Psoas muscle (tissue), 8 donors: ENCODE measurements at regions of chr10 and their contacts with region 1.

Region 1: DNA sequence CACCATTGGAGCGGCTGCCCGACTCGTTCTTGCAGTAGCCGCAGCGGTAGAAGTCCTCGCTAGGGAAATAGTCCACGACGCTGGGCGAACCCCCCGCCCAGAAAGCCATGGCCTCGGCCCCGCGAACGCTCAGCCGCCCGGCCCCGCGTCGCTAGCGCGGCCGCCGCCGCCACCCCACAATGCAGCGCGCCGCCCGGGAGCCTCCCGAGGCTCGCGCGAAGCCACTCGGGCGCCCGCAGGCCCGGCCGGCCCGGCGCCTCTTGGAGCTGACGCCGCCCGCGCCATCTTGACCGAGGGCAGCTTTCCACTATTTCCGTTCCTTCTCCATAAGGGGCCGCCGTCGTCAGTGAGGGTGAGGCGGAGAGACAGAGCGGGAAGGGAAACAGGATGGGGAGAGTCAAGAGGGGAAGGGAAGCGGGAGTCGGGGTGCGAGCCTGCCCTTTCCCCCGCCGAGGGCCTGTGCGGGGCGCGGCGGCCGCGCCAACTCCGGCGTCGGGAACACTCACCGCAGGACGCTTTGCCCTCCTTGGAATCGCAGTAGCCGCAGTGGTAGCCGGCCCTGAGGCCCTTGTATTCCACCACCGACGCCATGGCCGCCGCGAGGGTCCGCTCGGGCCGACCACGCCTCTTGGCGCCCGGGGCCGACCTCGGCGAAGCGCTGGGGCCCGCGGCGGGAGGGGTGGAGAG is at the start of gene ATE1:
- DNase-seq: peak; percentile 91 to 94
- ATAC-seq: peak; percentile 94 to 97 (median 96)
- H3K4me3 ChIP-seq: peak within 1 kb of the TSS; percentile 85
- H3K27ac ChIP-seq: peak within 1 kb of the TSS; percentile 99
- H3K4me1 ChIP-seq: peaks cover 19% of the 10 kb centered on the region
- H3K27me3 ChIP-seq: no peaks in the 10 kb centered on the region
- CTCF ChIP-seq: peak; percentile 8
- total RNA-seq, gene ATE1: 28.4 to 36.9 (median 31.4) TPM

Region 2: DNA sequence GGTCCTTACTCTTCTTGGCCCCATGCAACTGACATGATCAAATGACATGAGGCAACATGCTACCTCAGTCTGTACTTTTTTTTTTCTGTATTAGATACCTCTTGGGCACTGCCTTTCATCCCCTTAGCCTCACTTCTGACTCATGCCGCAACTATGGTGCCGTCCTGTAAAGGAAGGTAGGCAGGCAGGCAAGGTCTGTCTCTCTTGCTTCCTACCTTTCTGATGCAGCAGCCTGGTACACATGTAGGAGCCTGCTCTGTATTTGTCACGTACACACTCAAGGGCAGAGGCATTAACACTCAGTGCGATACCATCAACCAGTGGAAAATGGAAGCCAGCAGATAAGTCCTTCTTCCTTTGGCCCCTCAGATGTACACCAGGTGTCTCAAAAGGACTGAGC is 146.9 kb before region 1 on chr10:
- intact Hi-C with region 1: no loop called
- DNase-seq: no peak
- ATAC-seq: no peak
- H3K4me3 ChIP-seq: no peak overlapping the region
- H3K27ac ChIP-seq: no peak overlapping the region
- H3K4me1 ChIP-seq: no peaks in the 10 kb centered on the region
- H3K27me3 ChIP-seq: no peaks in the 10 kb centered on the region
- CTCF ChIP-seq: no peak

Region 3: DNA sequence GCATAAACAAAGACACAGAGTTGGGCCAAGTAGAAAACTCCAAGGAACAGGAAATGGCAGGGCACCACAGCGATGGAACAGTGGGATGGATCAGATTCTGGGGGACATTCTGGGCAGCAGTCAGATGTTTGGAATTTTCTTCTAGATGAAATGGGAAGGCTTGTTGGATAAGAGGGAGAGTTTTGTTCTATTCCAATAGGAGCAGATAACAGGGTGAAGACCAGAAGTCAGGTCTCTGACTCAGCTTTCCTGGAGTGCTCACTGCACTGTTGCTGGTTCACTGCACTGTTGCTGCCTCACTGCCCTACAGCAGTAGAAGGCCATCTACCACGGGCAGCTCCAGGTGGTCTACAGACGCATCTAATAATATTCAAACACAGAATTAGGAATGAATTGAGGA is 135.8 kb before region 1 on chr10:
- intact Hi-C with region 1: no loop called
- DNase-seq: no peak
- ATAC-seq: no peak
- H3K4me3 ChIP-seq: no peak overlapping the region
- H3K27ac ChIP-seq: no peak overlapping the region
- H3K4me1 ChIP-seq: no peaks in the 10 kb centered on the region
- H3K27me3 ChIP-seq: no peaks in the 10 kb centered on the region
- CTCF ChIP-seq: no peak

Region 4: GRCh38 chr10:121974535-121975294 is 46.7 kb after region 1 on chr10 and contains the start of gene NSMCE4A:
- intact Hi-C with region 1: loop called (anchors 2 to 5 kb)
- DNase-seq: peak; percentile 84 to 93
- ATAC-seq: peak; percentile 89 to 94 (median 90)
- H3K4me3 ChIP-seq: peak within 1 kb of the TSS; percentile 75
- H3K27ac ChIP-seq: peak within 1 kb of the TSS; percentile 89
- H3K4me1 ChIP-seq: peaks cover 14% of the 10 kb centered on the region
- H3K27me3 ChIP-seq: no peaks in the 10 kb centered on the region
- CTCF ChIP-seq: no peak
- total RNA-seq, gene NSMCE4A: 10.7 to 17.7 (median 14.6) TPM

Region 5: GRCh38 chr10:122019414-122019975 is 91.5 kb after region 1 on chr10:
- intact Hi-C with region 1: no loop called
- DNase-seq: peak in 1 of 2 donors; percentile 58
- ATAC-seq: peak; percentile 50 to 65 (median 60)
- H3K4me3 ChIP-seq: peak overlapping the region; percentile 51
- H3K27ac ChIP-seq: peak overlapping the region; percentile 98
- H3K4me1 ChIP-seq: peaks cover 33% of the 10 kb centered on the region
- H3K27me3 ChIP-seq: no peaks in the 10 kb centered on the region
- CTCF ChIP-seq: no peak

Region 6: DNA sequence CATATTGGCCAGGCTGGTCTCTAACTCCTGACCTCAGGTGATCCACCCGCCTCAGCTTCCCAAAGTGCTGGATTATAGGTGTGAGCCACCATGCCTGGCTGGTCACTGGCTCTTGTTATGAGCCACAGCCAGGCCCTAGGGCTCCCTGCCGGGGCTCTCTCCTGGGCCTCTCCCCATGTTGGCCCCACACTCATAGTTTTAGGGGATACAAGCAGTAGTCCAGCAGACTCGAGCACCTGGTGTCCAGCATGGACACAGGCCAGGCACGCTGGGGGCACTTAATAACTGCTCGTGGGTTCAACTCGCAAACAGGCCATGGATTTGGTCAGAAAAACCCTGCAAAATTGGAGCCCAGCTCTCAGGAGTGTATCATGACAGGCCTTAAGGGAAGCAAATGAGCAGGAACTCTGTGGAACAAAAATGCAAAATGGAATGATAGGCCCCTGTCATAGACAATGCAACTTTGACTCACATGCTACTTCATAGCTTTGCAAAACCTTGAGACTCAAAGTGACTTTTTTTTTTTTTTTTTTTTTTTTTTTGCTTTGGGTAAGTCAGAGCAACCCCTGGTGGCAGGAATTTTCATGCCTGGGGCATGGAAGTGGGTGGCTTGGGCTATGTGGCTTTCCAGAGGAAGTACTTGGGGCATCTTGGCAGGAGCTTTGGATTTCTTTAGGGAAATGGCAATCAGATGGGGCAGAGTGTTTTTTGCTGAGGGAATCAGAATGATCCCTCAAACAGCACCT is 123.4 kb after region 1 on chr10:
- intact Hi-C with region 1: loop called in 1 of 2 experiments (anchors 10 kb)
- DNase-seq: peak; percentile 38 to 63
- ATAC-seq: peak; percentile 47 to 63 (median 53)
- H3K4me3 ChIP-seq: no peak overlapping the region
- H3K27ac ChIP-seq: peak overlapping the region; percentile 94
- H3K4me1 ChIP-seq: peaks cover 61% of the 10 kb centered on the region
- H3K27me3 ChIP-seq: no peaks in the 10 kb centered on the region
- CTCF ChIP-seq: peak; percentile 74